GM13976 (cell line): ENCODE measurements at regions of chr12 and their contacts with region 1.

Region 1: DNA sequence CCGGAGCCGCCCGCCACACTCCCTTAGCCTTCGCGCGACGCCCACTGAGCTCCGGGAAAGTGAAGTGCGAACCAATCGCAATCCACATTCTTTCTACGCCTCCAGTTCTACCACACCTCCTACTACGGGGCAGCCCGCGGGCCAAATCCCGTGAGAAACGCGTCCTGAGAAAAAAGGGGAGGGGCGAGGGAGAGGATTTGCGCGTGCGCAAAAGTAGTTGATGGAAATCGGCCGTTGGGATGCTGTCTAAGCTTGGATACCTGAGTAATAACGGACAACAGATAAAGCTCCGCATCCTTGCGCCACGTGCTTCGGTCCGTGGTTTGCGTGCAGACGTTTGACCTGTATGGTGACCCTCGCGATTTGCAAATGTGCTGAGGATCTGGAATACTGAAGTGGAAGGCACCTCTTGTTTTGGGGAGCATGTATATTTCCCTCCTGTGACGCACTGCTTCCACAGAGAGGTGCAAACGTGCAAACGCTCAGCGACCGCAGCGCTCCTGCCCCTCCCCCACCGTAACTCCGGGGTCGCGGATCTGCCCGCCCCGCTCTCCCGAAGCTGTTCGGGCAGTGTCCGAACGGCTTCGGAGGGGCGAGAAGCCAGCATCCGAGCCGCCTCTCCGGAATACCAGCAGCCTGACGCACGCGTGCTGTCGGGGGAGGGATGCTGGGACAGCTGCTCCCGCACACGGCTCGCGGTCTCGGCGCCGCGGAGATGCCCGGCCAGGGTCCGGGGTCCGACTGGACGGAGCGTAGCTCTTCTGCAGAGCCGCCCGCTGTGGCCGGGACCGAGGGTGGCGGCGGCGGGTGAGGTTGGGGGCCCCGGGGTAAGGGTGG is at the starts of genes FAM216A and GPN3:
- DNase-seq: peak; percentile 96
- CTCF ChIP-seq: no peak

Region 2: GRCh38 chr12:110330544-110330943 is 137.9 kb before region 1 on chr12:
- in situ Hi-C with region 1: no loop called
- DNase-seq: no peak
- CTCF ChIP-seq: no peak

Region 3: GRCh38 chr12:110698171-110698902 is 229.9 kb after region 1 on chr12:
- in situ Hi-C with region 1: loop called (anchors 10 kb)
- DNase-seq: peak; percentile 86
- CTCF ChIP-seq: peak; percentile 84